Activated B cell treated with CpG ODN at 0.5 μM for 24 hours (primary cell): ENCODE measurements at regions of chr4 and their contacts with region 1.

Region 1: DNA sequence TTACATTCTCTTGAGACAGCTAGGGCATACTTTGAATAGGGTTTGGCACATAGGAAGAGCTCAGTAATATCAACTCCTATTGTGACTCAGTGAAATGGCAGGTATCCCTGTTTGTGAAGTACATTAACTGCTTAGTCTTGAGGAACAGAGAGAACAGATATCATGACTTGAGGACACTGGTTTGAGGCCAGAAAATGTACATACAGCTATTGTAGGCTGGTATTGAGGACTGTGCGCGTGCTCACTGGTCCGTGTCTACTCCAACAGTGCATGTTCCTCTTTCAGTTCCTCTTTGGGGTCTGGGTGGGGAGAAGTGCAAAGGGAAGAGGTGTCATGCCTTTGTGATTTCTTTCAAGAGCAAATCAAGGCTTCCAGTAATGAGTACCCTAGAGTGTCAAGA is 34.6 kb upstream of the TBC1D9 start:
- DNase-seq: peak; percentile 67
- ATAC-seq: peak; percentile 93
- H3K4me3 Mint-ChIP-seq: peak overlapping the region; percentile 48
- H3K27ac Mint-ChIP-seq: peak overlapping the region; percentile 71
- H3K4me1 Mint-ChIP-seq: peaks cover 76% of the 10 kb centered on the region
- H3K27me3 Mint-ChIP-seq: no peaks in the 10 kb centered on the region
- CTCF ChIP-seq: no peak

Region 2: GRCh38 chr4:140777894-140778293 is 12.9 kb before region 1 on chr4:
- CTCF ChIA-PET with region 1: interaction called, 3 read pairs
- POLR2A ChIA-PET with region 1: interaction called, 8 read pairs
- intact Hi-C with region 1: loop called (anchors 2 kb)
- DNase-seq: no peak
- ATAC-seq: no peak
- H3K4me3 Mint-ChIP-seq: no peak overlapping the region
- H3K27ac Mint-ChIP-seq: no peak overlapping the region
- H3K4me1 Mint-ChIP-seq: peaks cover 30% of the 10 kb centered on the region
- H3K27me3 Mint-ChIP-seq: no peaks in the 10 kb centered on the region
- CTCF ChIP-seq: no peak

Region 3: GRCh38 chr4:140807491-140808252 is 16.9 kb after region 1 on chr4:
- CTCF ChIA-PET with region 1: interaction called, 15 read pairs
- POLR2A ChIA-PET with region 1: interaction called, 150 read pairs
- intact Hi-C with region 1: loop called (anchors 1 kb)
- DNase-seq: no peak
- ATAC-seq: peak; percentile 78
- H3K4me3 Mint-ChIP-seq: peak overlapping the region; percentile 72
- H3K27ac Mint-ChIP-seq: peak overlapping the region; percentile 93
- H3K4me1 Mint-ChIP-seq: peaks cover 89% of the 10 kb centered on the region
- H3K27me3 Mint-ChIP-seq: no peaks in the 10 kb centered on the region
- CTCF ChIP-seq: no peak

Region 4: GRCh38 chr4:140829825-140830224 is 39.1 kb after region 1 on chr4:
- CTCF ChIA-PET with region 1: no interaction called
- POLR2A ChIA-PET with region 1: interaction called, 8 read pairs
- intact Hi-C with region 1: loop called (anchors 1 kb)
- DNase-seq: no peak
- ATAC-seq: peak; percentile 95
- H3K4me3 Mint-ChIP-seq: peak overlapping the region; percentile 33
- H3K27ac Mint-ChIP-seq: peak overlapping the region; percentile 91
- H3K4me1 Mint-ChIP-seq: peaks cover 73% of the 10 kb centered on the region
- H3K27me3 Mint-ChIP-seq: no peaks in the 10 kb centered on the region
- CTCF ChIP-seq: no peak

Region 5: DNA sequence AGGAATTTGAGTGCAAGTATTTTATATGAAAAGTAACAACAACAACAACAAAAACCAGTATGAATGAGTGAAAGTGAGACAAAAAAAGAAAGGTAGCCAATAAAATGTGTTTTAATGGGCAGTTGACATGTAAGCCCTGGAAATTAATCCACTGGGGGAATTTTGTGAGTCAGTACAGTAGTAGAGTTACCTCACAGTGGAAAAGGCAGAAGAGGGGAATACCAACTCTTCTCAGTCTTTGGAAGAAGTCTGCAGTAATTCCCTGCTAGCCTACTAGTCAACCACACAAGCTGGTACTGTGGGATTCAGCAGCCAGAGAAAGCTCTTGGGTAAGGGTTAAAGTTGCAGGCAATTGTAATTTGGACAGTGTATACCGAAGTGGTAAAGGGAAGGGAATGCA is 769.3 kb after region 1 on chr4:
- CTCF ChIA-PET with region 1: no interaction called
- POLR2A ChIA-PET with region 1: no interaction called
- intact Hi-C with region 1: no loop called
- DNase-seq: no peak
- ATAC-seq: no peak
- H3K4me3 Mint-ChIP-seq: no peak overlapping the region
- H3K27ac Mint-ChIP-seq: no peak overlapping the region
- H3K4me1 Mint-ChIP-seq: no peaks in the 10 kb centered on the region
- H3K27me3 Mint-ChIP-seq: no peaks in the 10 kb centered on the region
- CTCF ChIP-seq: no peak